Activated CD4-positive, alpha-beta T cell treated with anti-CD3 and anti-CD28 coated beads, Interleukin-2, amount 10 ng/mL, durations not matched to agents 24 days and 14 days (primary cell): ENCODE measurements at regions of chr12 and their contacts with region 1.

Region 1: GRCh38 chr12:51424662-51425438 is at the start of gene SLC4A8:
- DNase-seq: peak; percentile 95
- H3K4me3 Mint-ChIP-seq: peak within 1 kb of the TSS; percentile 83
- H3K27ac Mint-ChIP-seq: peak within 1 kb of the TSS; percentile 42
- H3K4me1 Mint-ChIP-seq: peaks cover 17% of the 10 kb centered on the region
- H3K27me3 Mint-ChIP-seq: peaks cover 10% of the 10 kb centered on the region
- total RNA-seq, gene SLC4A8: 1.4 and 2.3 TPM in 2 replicates

Region 2: DNA sequence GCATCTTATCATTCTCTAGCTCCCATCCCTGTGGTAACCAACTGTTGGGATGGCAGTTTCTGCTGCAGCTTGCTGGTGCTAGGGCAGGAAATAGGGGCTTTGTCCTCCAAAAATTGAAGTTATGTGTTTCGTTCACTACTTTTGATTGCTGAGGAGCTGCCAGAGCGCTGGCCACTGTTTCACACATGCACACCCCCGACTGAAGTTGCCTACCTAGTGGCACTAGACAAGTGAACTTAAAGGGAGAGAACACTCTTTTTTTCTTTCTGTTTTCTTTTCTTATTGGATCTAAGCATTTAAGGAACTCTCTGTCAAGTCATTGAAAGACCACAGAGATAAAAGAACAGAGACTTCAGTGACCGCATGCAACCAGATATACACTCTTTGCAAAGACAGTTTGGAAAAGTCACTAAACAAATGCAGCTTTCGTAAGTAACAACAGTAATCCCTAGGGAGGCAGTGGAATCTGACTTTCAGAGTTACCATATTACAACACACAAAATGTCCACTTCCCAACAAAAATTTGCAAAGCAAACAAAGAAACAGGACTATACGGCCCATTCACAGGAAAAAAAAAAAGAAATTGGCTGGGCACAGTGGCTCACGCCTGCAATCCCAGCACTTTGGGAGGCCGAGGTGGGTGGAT is 263.9 kb before region 1 on chr12:
- intact Hi-C with region 1: no loop called
- DNase-seq: no peak
- H3K4me3 Mint-ChIP-seq: no peak overlapping the region
- H3K27ac Mint-ChIP-seq: no peak overlapping the region
- H3K4me1 Mint-ChIP-seq: peaks cover 29% of the 10 kb centered on the region
- H3K27me3 Mint-ChIP-seq: no peaks in the 10 kb centered on the region

Region 3: GRCh38 chr12:51441583-51441982 is 16.7 kb after region 1 on chr12:
- intact Hi-C with region 1: no loop called
- DNase-seq: peak; percentile 70
- H3K4me3 Mint-ChIP-seq: peak overlapping the region; percentile 34
- H3K27ac Mint-ChIP-seq: no peak overlapping the region
- H3K4me1 Mint-ChIP-seq: peaks cover 40% of the 10 kb centered on the region
- H3K27me3 Mint-ChIP-seq: peaks cover 3% of the 10 kb centered on the region

Region 4: GRCh38 chr12:51531978-51532497 is 107.2 kb after region 1 on chr12:
- intact Hi-C with region 1: loop called (anchors 1 kb)
- DNase-seq: peak; percentile 94
- H3K4me3 Mint-ChIP-seq: no peak overlapping the region
- H3K27ac Mint-ChIP-seq: no peak overlapping the region
- H3K4me1 Mint-ChIP-seq: peaks cover 7% of the 10 kb centered on the region
- H3K27me3 Mint-ChIP-seq: peaks cover 29% of the 10 kb centered on the region

Region 5: DNA sequence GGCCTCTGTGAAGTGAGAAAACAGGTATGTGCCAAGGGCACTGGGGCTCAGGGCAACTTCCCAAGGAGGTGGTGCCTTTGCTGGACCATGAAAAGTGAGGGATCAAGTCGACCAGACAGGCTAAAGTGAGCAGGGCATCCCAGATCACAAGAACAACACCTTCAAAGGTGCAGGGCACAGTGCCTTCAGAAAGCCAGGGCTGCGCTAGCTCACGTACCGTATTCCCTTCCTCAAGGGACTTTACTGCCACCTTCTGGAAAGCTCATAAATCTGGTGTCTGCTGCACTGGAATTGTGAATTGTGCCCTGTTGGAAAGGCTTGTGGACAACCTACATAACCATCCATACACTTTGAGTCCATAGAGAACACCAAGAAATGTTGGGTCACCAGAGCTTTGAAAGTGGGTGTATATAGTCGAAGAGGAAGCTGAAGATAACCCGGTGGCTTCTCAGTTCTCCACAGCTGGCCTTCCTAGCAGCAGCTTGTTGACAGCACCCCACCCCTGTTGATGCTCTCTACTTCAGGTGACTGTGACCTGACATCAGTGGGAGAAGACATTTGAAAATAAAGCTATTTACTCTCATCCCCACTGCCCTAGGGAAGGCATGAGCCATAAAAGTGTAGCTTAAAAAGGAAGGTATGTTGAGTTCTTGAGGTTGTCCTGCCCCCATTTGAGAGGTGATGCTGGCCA is 399.2 kb after region 1 on chr12:
- intact Hi-C with region 1: loop called (anchors 5 kb)
- DNase-seq: peak; percentile 72
- H3K4me3 Mint-ChIP-seq: no peak overlapping the region
- H3K27ac Mint-ChIP-seq: no peak overlapping the region
- H3K4me1 Mint-ChIP-seq: peaks cover 26% of the 10 kb centered on the region
- H3K27me3 Mint-ChIP-seq: peaks cover 10% of the 10 kb centered on the region

Region 6: DNA sequence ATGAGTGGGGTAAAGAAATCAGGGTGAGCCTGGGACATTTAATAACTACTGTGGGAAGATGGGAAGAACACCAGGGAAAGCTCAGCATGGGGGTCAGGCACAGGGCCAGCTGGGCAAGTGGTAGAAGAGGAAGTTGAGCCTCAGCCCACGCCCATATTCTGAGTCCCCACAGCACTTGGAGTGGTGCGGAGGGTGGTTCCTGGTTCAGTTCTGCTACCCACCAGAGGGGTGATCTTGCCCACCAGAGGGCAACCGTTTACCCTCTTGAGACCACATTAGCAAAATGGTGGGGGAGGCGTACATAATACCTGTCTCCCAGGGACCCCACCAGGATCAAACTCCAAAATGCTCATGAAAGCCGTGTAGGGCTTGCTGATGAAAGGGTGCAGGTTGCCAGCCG is 446.3 kb after region 1 on chr12:
- intact Hi-C with region 1: loop called (anchors 1 kb)
- DNase-seq: no peak
- H3K4me3 Mint-ChIP-seq: no peak overlapping the region
- H3K27ac Mint-ChIP-seq: no peak overlapping the region
- H3K4me1 Mint-ChIP-seq: peaks cover 8% of the 10 kb centered on the region
- H3K27me3 Mint-ChIP-seq: peaks cover 47% of the 10 kb centered on the region